GM10248 (cell line): ENCODE measurements at regions of chrX and their contacts with region 1.

Region 1: GRCh38 chrX:132615391-132616131 is 126.7 kb upstream of the MBNL3 start:
- DNase-seq: no peak
- CTCF ChIP-seq: peak; percentile 34

Region 2: GRCh38 chrX:131827935-131828334 is 787.6 kb before region 1 on chrX:
- CTCF ChIA-PET with region 1: interaction called, 15 read pairs
- POLR2A ChIA-PET with region 1: no interaction called
- DNase-seq: peak; percentile 28
- CTCF ChIP-seq: peak; percentile 25

Region 3: GRCh38 chrX:132219343-132219768 is 396.2 kb before region 1 on chrX and contains the start of gene RAP2C:
- CTCF ChIA-PET with region 1: interaction called, 17 read pairs
- POLR2A ChIA-PET with region 1: no interaction called
- DNase-seq: peak; percentile 66
- CTCF ChIP-seq: peak; percentile 56

Region 4: DNA sequence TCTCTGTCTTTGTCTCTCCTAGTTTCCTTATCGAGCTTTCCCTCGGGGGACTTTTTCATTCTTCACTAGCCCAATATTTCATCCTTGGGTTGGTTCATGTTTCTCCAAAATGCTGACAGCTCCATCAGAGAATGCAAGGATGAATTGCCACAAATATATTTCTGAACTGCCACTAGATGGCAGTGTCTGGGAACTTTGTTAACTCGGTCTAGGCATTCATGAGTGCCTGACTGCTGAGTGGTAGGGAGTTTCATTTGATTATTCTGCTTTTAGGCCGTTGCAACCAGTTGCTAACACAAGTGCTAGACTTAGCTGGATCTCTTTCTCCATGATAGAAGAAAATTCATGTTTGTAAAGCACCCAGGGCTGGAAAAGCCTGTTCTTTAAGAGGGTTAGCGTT is 322.8 kb before region 1 on chrX:
- CTCF ChIA-PET with region 1: interaction called, 75 read pairs
- POLR2A ChIA-PET with region 1: no interaction called
- DNase-seq: peak; percentile 34
- CTCF ChIP-seq: peak; percentile 35

Region 5: DNA sequence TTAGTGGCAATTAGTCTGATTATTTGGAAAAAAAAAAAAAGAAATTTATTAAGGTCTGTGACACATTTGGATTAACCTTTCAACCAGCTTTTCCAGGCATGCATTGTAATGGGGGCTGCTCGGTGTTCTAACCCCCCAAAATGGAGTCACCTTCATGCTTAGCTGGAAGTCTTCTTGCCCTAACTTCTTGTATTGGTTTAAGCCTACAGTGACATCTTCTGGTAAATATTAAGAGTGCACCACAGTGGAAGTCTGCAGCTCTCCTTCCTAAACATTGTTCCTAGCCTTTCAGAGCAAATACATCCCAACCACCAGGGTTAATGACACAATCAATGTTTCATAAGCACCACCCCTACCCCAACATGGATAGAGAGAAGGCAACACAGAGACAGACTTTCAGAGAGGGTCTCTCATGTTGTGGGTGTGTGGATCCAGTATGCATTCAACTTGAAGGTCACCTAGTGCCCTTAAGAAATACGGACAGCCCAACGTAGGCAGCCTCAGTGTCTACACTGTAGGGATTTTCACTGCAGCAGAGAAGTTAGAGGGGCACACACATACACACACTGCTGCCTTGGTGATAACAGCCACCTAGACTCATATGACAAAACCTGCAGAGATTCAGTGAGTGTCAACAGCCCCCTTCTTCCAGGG is 16.1 kb after region 1 on chrX:
- CTCF ChIA-PET with region 1: interaction called, 15 read pairs
- POLR2A ChIA-PET with region 1: no interaction called
- DNase-seq: peak; percentile 15
- CTCF ChIP-seq: peak; percentile 38